Common myeloid progenitor, CD34-positive (primary cell): ENCODE measurements at regions of chr15 and their contacts with region 1.

Region 1: DNA sequence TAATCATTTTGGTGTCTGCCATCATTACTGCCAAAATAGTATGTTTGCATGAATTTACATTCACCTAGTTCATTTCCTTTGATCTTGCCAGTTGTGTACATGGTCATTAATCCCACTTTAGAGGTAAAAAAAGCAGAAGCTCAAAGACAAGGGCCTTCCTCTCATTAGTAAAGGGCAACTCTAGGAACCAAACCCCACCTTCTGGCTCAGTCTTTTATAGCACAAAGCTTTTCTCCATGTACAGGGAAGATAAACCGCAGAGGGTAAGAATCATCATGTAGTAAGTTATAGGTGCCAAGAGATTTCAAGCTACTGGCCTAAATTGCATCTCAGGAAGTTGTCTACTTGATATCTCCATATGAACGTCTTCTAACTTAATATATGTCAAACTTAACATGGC is 19.3 kb upstream of the SPG21 start:
- DNase-seq: peak; percentile 52 to 74 (median 73)
- H3K4me3 ChIP-seq: no peak overlapping the region
- H3K27ac ChIP-seq: no peak overlapping the region
- H3K4me1 ChIP-seq: peaks cover 0 to 15% (median 3%) of the 10 kb centered on the region in 4 experiments
- H3K27me3 ChIP-seq: no peaks in the 10 kb centered on the region

Region 2: GRCh38 chr15:64987136-64987720 is 21.8 kb before region 1 on chr15:
- CTCF ChIA-PET with region 1: interaction called, 14 read pairs
- POLR2A ChIA-PET with region 1: interaction called, 3 read pairs
- DNase-seq: no peak
- H3K4me3 ChIP-seq: no peak overlapping the region
- H3K27ac ChIP-seq: no peak overlapping the region
- H3K4me1 ChIP-seq: peaks cover 16 to 45% (median 36%) of the 10 kb centered on the region in 4 experiments
- H3K27me3 ChIP-seq: no peaks in the 10 kb centered on the region

Region 3: GRCh38 chr15:64997745-64998375 is 11.1 kb before region 1 on chr15:
- CTCF ChIA-PET with region 1: interaction called, 16 read pairs
- POLR2A ChIA-PET with region 1: no interaction called
- DNase-seq: no peak
- H3K4me3 ChIP-seq: no peak overlapping the region
- H3K27ac ChIP-seq: no peak overlapping the region
- H3K4me1 ChIP-seq: peaks cover 0 to 3% (median 0%) of the 10 kb centered on the region in 4 experiments
- H3K27me3 ChIP-seq: no peaks in the 10 kb centered on the region